Breast epithelium (tissue), 4 donors: ENCODE measurements at regions of chr1 and their contacts with region 1.

Region 1: GRCh38 chr1:118827636-118828035 is 160.5 kb downstream of the TBX15 start:
- DNase-seq: no peak
- H3K4me3 ChIP-seq: no peak overlapping the region
- H3K27ac ChIP-seq: no peak overlapping the region
- H3K4me1 ChIP-seq: no peaks in the 10 kb centered on the region
- H3K27me3 ChIP-seq: no peaks in the 10 kb centered on the region
- CTCF ChIP-seq: no peak
- POLR2A ChIP-seq: no peak

Region 2: DNA sequence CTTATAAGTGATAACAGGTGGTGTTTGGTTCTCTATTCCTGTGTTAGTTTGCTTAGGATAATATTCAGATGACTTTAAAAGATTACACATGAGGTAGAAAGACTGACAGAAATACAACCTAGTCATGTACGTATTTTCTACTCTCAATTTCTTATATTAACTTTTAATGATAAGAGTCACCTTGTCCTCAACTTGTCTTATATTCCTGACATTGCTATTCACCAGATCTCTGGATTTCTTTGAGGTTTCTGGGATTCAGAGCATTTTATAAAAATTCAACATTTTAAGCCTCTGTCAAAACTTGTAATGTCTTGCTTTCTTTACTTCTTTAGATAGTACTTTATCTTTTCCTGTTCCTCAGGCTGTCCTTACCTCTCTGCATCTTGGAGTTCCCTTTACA is 73.7 kb before region 1 on chr1:
- intact Hi-C with region 1: loop called (anchors 2 kb)
- DNase-seq: no peak
- H3K4me3 ChIP-seq: no peak overlapping the region
- H3K27ac ChIP-seq: no peak overlapping the region
- H3K4me1 ChIP-seq: no peaks in the 10 kb centered on the region
- H3K27me3 ChIP-seq: no peaks in the 10 kb centered on the region
- CTCF ChIP-seq: no peak
- POLR2A ChIP-seq: no peak

Region 3: GRCh38 chr1:118871582-118872171 is 44.0 kb after region 1 on chr1:
- intact Hi-C with region 1: no loop called
- DNase-seq: no peak
- H3K4me3 ChIP-seq: no peak overlapping the region
- H3K27ac ChIP-seq: no peak overlapping the region
- H3K4me1 ChIP-seq: no peaks in the 10 kb centered on the region
- H3K27me3 ChIP-seq: no peaks in the 10 kb centered on the region
- CTCF ChIP-seq: no peak
- POLR2A ChIP-seq: no peak